ENCODE measurements at regions of chr4 and their contacts with region 1.

Region 1: DNA sequence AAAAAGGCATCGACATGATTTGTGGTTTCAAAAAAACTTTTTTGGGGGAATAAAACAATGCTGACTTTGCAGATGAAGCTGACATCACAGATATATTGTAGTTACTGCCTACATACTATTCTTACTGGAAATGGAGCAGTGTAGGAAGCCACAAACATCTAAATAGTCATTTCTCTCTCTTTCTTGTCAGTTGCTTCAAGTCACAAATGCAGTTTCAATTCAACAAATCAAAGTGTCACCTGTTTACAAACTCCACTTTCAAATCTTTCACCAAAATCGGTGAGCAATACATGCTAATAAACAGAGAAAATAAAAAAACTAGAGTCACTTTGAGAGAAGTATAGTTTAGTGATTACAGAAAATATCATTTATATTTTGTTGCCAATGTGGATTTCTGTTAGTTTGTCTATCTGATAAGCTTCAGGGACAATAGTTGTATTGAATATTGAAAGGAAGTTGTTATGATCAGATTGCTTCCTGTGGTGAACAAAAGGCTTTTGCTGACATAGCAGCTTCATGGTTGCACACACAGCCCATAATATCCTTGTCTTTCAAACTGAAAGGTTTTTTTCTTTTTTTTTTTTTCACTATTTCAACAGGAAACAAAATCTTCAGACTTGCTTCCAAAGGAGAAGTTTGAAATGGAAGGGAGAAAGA is 49.7 kb upstream of the PTPN13 start:
- DNase-seq: peak in 2 of 9 donors; percentile 9 to 21
- ATAC-seq: peak; percentile 45
- H3K4me3 ChIP-seq: no peak overlapping the region
- H3K4me3 Mint-ChIP-seq: peak overlapping the region in 3 of 10 donors; percentile 29 to 69 (median 68)
- H3K27ac ChIP-seq: no peak overlapping the region
- H3K27ac Mint-ChIP-seq: peak overlapping the region in 1 of 9 donors; percentile 93
- H3K4me1 ChIP-seq: no peaks in the 10 kb centered on the region
- H3K4me1 Mint-ChIP-seq: peaks cover 5 to 33% (median 13%) of the 10 kb centered on the region in 7 donors
- H3K27me3 ChIP-seq: no peaks in the 10 kb centered on the region
- H3K27me3 Mint-ChIP-seq: peaks cover 4 to 20% (median 15%) of the 10 kb centered on the region in 5 donors

Region 2: DNA sequence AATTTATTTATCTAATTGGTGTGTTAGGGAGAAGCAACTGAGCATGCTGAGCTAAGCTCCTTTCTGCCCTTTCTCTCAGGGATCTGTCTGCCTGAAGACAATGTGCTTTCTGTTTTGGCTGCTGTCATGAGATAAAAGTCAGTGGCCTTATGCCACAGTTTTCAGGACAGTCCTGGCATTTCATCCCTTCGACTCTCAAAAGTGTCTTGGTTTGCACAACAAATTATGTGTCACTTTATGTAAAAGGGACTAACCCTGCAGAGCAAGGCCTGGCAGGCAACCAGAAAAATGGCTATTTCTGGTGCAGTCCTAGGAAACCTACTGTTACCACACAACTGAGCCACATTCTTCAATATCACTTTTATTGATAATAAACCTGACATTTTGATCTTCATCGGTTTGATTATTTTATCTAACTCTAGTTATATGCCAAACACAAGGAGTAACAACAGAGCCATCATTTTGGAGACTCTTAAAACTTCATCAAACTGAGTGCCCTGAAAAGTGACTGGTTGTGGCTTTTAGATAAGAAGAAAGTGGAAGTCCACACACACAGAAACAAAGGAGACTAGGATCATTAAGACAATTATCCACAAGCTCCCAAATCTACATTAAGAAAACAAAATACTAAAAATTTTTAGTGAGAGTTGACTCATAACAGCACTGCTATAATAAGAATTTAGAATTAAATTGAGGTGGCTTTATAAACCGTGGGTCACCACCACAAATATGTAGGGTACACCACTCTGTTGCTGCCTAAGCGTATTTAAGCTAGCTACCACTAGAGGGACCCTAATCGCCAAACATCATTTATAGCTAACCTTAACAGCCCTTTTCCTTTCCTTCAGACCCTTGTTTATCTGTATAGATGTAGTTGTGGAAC is 46.2 kb before region 1 on chr4:
- CTCF ChIA-PET with region 1: no interaction called
- POLR2A ChIA-PET with region 1: no interaction called
- intact Hi-C with region 1: loop called in 1 of 2 experiments (anchors 5 kb)
- DNase-seq: peak in 4 of 9 donors; percentile 4 to 26 (median 18)
- ATAC-seq: peak; percentile 78
- H3K4me3 ChIP-seq: no peak overlapping the region
- H3K4me3 Mint-ChIP-seq: no peak overlapping the region
- H3K27ac ChIP-seq: no peak overlapping the region
- H3K27ac Mint-ChIP-seq: no peak overlapping the region
- H3K4me1 ChIP-seq: no peaks in the 10 kb centered on the region
- H3K4me1 Mint-ChIP-seq: peaks cover 0 to 13% (median 0%) of the 10 kb centered on the region in 7 donors
- H3K27me3 ChIP-seq: no peaks in the 10 kb centered on the region
- H3K27me3 Mint-ChIP-seq: peaks cover 9 to 21% (median 12%) of the 10 kb centered on the region in 5 donors

Measured in naive thymus-derived CD4-positive, alpha-beta T cell (primary cell).